Activated T-helper 2 cell treated with anti-CD3 and anti-CD28 coated beads, Interferon-gamma antibody, Interleukin-2, Interleukin-4, amounts not matched to agents 10 μg/mL and 5 μg/mL and 100 μg/mL, durations not matched to agents 14 hours and 24 hours and 36 hours (primary cell): ENCODE measurements at regions of chr18 and their contacts with region 1.

Region 1: GRCh38 chr18:812376-813171 is 532 bp upstream of the YES1 start:
- DNase-seq: peak; percentile 78
- H3K4me3 Mint-ChIP-seq: peak overlapping the region; percentile 89
- H3K27ac Mint-ChIP-seq: peak overlapping the region; percentile 98
- H3K4me1 Mint-ChIP-seq: peaks cover 69% of the 10 kb centered on the region
- H3K27me3 Mint-ChIP-seq: no peaks in the 10 kb centered on the region

Region 2: DNA sequence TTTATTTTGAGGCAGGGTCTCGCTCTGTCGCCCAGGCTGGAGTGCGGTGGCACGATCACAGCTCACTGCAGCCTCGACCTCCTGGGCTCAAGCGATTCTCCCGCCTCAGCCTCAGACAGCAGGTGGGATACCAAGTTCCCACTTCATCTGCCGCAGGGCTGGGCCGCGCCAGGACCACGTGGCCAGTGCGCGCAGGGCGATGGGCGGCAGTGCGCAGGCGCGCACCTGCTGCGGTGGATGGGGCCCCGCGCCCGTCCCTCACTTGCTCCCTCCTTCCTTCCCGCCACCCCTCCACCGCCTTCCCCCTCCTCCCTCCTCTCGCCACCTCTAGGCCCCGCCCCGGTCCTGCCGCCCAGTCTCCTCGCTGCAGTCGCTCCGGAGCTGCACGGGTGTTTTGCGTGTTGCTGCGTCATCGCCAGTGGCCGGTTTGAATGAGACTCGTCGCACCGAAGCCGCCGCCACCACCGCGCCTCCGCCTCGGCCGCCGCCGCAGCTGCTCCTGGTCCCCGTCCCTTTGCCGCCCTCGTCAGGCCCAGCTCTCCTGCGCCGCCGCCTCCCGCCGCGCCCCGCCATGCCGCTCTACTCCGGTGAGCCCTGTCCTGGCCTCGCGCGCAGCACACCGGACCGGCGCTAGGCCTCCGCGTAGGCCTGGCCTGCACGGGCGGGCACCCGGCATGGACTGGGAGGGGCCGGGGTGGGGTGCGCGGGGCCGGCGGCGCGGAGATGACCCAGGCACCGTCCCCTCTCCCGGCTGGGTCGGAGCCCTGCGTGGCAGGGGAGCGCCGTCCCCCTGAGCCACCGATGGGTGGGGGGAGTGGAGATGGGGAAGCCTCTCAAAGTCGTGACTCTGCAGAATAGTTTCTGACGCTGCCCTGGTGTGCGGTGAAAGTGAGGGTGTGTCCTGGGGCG is 654.2 kb before region 1 on chr18 and contains the start of gene USP14:
- intact Hi-C with region 1: loop called (anchors 2 kb)
- DNase-seq: peak; percentile 96
- H3K4me3 Mint-ChIP-seq: peak within 1 kb of the TSS; percentile 96
- H3K27ac Mint-ChIP-seq: peak within 1 kb of the TSS; percentile 89
- H3K4me1 Mint-ChIP-seq: peaks cover 19% of the 10 kb centered on the region
- H3K27me3 Mint-ChIP-seq: no peaks in the 10 kb centered on the region
- total RNA-seq, gene USP14: 89.7 and 98.4 TPM in 2 replicates

Region 3: GRCh38 chr18:596288-596881 is 216.2 kb before region 1 on chr18:
- intact Hi-C with region 1: loop called (anchors 2 kb)
- DNase-seq: no peak
- H3K4me3 Mint-ChIP-seq: no peak overlapping the region
- H3K27ac Mint-ChIP-seq: no peak overlapping the region
- H3K4me1 Mint-ChIP-seq: peaks cover 3% of the 10 kb centered on the region
- H3K27me3 Mint-ChIP-seq: peaks cover 25% of the 10 kb centered on the region

Region 4: GRCh38 chr18:658001-658946 is 154.3 kb before region 1 on chr18:
- intact Hi-C with region 1: loop called (anchors 2 kb)
- DNase-seq: peak; percentile 75
- H3K4me3 Mint-ChIP-seq: peak overlapping the region; percentile 94
- H3K27ac Mint-ChIP-seq: peak overlapping the region; percentile 94
- H3K4me1 Mint-ChIP-seq: peaks cover 38% of the 10 kb centered on the region
- H3K27me3 Mint-ChIP-seq: no peaks in the 10 kb centered on the region

Region 5: GRCh38 chr18:712401-713134 is 100.0 kb before region 1 on chr18 and contains the start of gene ENOSF1:
- intact Hi-C with region 1: loop called (anchors 1 kb)
- DNase-seq: peak; percentile 85
- H3K4me3 Mint-ChIP-seq: peak within 1 kb of the TSS; percentile 86
- H3K27ac Mint-ChIP-seq: peak within 1 kb of the TSS; percentile 87
- H3K4me1 Mint-ChIP-seq: peaks cover 43% of the 10 kb centered on the region
- H3K27me3 Mint-ChIP-seq: no peaks in the 10 kb centered on the region
- total RNA-seq, gene ENOSF1: 93.6 and 102 TPM in 2 replicates

Region 6: DNA sequence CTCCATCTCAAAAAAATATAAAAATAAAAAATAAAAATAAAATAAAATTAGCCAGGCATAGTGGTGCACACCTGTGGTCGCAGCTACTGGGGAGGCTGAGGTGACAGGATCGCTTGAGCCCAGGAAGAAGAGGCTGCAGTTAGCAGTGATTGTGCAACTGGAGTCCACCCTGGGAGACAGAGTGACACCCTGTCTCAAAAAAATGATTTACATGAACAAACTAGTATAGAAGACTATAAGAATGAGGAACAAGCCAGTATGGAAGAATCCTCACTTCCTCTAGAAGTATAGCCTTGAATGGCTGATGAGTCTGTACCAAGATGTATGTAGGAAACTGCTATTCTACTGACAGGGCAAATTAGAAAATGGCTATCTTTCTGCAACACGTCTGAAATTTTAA is 11.4 kb before region 1 on chr18:
- intact Hi-C with region 1: loop called (anchors 1 kb)
- DNase-seq: no peak
- H3K4me3 Mint-ChIP-seq: no peak overlapping the region
- H3K27ac Mint-ChIP-seq: no peak overlapping the region
- H3K4me1 Mint-ChIP-seq: peaks cover 49% of the 10 kb centered on the region
- H3K27me3 Mint-ChIP-seq: no peaks in the 10 kb centered on the region

Region 7: DNA sequence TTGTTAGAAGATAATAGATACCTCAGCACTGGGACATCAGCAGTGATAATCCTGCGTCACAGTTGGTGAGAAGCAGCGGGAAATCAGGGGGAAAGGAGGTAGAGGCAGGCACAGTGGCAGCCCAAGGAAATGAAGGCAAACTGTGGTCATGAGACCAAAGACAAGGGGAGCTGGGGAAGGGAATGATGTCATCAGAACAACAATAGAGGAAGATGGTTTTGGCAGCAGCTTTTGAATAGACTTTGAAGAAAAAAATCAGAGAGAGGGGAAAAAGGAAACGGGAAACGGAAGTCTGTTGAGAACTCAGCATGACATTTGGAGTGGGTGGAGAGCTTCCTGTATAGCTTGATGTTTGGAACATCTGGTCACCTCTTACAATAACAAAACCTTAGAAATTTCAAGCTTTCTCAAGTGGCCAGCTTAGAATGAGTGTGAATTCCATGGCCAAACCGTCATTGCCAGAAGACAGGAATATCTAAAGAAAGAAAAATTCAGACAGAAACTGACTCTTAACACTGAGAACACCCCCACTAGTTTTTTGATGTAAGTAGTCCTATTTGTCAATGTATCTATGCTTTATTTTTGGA is 17.8 kb after region 1 on chr18:
- intact Hi-C with region 1: loop called (anchors 1 kb)
- DNase-seq: no peak
- H3K4me3 Mint-ChIP-seq: peak overlapping the region; percentile 36
- H3K27ac Mint-ChIP-seq: peak overlapping the region; percentile 56
- H3K4me1 Mint-ChIP-seq: peaks cover 21% of the 10 kb centered on the region
- H3K27me3 Mint-ChIP-seq: peaks cover 6% of the 10 kb centered on the region